ENCODE measurements at regions of chr4 and their contacts with region 1.

Region 1: GRCh38 chr4:145936142-145936996 is 2.3 kb downstream of the ZNF827 start:
- DNase-seq: peak; percentile 41
- H3K4me3 Mint-ChIP-seq: peak overlapping the region; percentile 95
- H3K27ac Mint-ChIP-seq: peak overlapping the region; percentile 96
- H3K4me1 Mint-ChIP-seq: peaks cover 48% of the 10 kb centered on the region
- H3K27me3 Mint-ChIP-seq: peaks cover 3% of the 10 kb centered on the region

Region 2: DNA sequence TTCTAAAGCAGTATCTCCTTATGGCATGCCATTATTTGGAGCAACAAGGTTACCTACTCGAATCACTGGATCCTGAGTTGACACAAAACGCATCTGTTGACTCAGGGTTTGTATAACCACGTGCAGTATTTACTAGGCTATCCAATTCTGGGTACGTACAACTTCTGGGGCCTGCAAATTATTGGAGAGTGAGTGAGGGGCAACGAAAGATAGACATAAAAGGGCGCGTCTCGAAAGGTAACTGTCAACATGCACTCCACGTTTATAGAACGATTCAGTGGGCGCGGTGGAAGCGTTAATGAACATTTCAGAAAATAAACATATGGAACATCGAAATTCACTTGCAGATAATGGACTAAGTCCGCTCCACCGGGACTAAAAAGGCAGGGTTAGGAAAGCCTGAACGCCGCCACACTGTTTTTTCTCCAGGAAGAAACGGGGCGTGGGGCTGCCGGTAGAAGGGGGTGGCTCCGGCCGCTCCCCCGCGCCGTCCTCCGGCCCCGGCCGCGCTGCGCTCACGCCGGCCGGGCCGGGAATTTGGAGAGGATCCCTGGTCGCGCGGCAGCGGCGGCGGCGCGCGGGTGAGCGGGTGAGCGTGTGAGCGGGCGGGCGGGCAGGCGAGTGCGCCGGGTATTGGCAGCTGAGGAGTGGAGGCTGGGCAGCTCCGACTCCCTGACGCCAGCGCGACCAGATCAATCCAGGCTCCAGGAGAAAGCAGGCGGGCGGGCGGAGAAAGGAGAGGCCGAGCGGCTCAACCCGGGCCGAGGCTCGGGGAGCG is 455.0 kb before region 1 on chr4 and contains the start of gene SMAD1:
- intact Hi-C with region 1: loop called (anchors 2 kb)
- DNase-seq: peak; percentile 11
- H3K4me3 Mint-ChIP-seq: peak within 1 kb of the TSS; percentile 73
- H3K27ac Mint-ChIP-seq: peak within 1 kb of the TSS; percentile 49
- H3K4me1 Mint-ChIP-seq: peaks cover 6% of the 10 kb centered on the region
- H3K27me3 Mint-ChIP-seq: peaks cover 33% of the 10 kb centered on the region
- total RNA-seq, gene SMAD1: 3.1 and 3.2 TPM in 2 replicates

Region 3: GRCh38 chr4:145829629-145830395 is 106.6 kb before region 1 on chr4:
- intact Hi-C with region 1: loop called (anchors 1 kb)
- DNase-seq: no peak
- H3K4me3 Mint-ChIP-seq: peak overlapping the region; percentile 63
- H3K27ac Mint-ChIP-seq: peak overlapping the region; percentile 91
- H3K4me1 Mint-ChIP-seq: peaks cover 61% of the 10 kb centered on the region
- H3K27me3 Mint-ChIP-seq: no peaks in the 10 kb centered on the region

Region 4: GRCh38 chr4:145956288-145956890 is 20.0 kb after region 1 on chr4:
- intact Hi-C with region 1: loop called (anchors 2 kb)
- DNase-seq: no peak
- H3K4me3 Mint-ChIP-seq: no peak overlapping the region
- H3K27ac Mint-ChIP-seq: no peak overlapping the region
- H3K4me1 Mint-ChIP-seq: peaks cover 5% of the 10 kb centered on the region
- H3K27me3 Mint-ChIP-seq: peaks cover 4% of the 10 kb centered on the region

Region 5: GRCh38 chr4:146333187-146333894 is 397.0 kb after region 1 on chr4:
- intact Hi-C with region 1: loop called (anchors 10 kb)
- DNase-seq: peak; percentile 1
- H3K4me3 Mint-ChIP-seq: no peak overlapping the region
- H3K27ac Mint-ChIP-seq: no peak overlapping the region
- H3K4me1 Mint-ChIP-seq: no peaks in the 10 kb centered on the region
- H3K27me3 Mint-ChIP-seq: no peaks in the 10 kb centered on the region